ENCODE measurements at regions of chr19 and their contacts with region 1.

Region 1: GRCh38 chr19:35718341-35719041 is 688 bp downstream of the KMT2B start:
- DNase-seq: peak; percentile 30

Region 2: GRCh38 chr19:35612559-35613321 is 105.8 kb before region 1 on chr19 and contains the start of gene HAUS5:
- CTCF ChIA-PET with region 1: no interaction called
- POLR2A ChIA-PET with region 1: no interaction called
- DNase-seq: peak; percentile 99

Region 3: DNA sequence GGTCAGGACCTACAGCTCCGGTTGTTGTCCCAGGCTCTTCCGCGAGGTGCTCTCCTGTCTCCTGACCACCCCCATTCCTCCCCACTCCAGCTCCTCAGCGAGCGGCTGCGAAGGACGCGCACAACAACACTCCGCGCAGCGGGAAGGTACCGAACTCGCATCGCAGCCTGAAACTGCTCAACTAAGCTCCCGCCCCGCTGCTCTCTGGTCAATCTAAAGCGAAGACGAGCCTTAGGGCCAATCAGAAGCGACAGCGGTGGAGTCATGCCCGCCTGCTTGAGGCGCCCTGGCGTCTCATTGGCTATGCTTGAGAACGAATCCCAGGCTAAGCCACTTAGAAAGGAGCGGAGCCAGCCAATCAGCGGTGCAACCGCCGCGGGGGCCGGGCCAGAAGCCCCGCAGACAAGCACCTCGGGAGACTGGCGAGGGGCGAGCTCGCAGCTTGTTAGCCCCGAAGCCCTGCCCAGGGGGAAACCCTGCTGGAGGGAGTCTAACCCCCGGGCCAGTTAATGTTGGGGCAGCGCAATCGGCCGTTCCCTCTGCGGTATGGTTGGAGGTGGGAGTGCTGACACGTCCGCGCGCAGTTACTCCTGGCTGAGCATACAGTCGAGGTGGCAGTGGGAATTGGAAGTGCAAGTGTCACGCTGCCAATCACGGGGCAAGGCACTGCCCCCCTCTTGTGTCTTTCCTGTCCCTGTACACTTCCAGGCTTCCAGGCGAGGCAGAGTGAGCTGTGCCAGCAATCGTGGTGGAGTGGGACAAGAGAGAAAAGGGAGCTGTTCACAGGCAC is 16.1 kb before region 1 on chr19:
- CTCF ChIA-PET with region 1: no interaction called
- POLR2A ChIA-PET with region 1: interaction called, 13 read pairs
- DNase-seq: peak; percentile 94

Region 4: DNA sequence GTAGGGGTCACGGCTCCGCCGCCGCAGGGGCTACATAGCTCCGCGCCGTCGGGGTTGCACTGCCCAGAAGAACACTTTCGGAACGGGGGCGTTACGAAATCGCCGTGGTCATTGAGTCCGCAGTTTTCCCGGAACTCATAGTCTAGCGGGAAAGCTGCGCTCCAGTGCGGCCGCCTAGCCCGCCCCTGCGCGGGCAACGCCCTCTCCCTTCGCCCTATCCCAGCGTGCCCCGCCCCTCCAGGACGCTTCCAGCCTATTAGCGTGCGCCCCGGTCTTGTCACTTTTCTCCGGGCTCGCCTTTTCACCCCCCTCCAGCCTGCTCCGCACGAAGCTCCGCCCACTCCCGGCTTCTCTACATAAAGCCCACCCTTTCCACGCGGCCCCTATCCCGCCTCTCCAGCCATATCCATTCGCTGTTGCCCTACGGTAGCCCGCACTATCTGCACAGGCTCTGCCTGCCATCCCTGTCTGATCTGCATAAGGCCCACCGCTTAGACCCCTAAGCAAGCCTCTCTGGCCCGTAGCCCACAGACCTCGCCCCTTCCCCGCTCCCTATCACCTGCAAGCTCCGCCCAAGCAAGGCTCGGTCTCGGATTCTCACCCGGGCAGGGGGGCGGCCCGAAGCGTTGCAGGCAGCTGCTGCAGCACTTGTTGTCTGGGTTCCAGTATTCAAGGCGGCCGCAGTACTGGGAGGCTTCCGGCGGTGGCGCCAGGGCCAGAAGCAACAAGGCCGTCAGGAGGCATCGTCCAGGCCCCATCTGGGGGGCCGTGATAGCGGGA is 22.1 kb after region 1 on chr19:
- CTCF ChIA-PET with region 1: no interaction called
- POLR2A ChIA-PET with region 1: interaction called, 10 read pairs
- DNase-seq: peak; percentile 97

Measured in HEK293T (cell line).